Activated T-helper 1 cell treated with anti-CD3 and anti-CD28 coated beads, Interleukin-12 subunit alpha, Interleukin-12 subunit beta, Interleukin-2, Interleukin-4 antibody, amounts not matched to agents 30 ng/mL and 10 ng/mL and 1 ng/mL, durations not matched to agents 14 hours and 24 hours and 36 hours (primary cell): ENCODE measurements at regions of chr6 and their contacts with region 1.

Region 1: GRCh38 chr6:106525111-106525881 is 104.0 kb downstream of the RTN4IP1 start:
- DNase-seq: no peak
- H3K4me3 Mint-ChIP-seq: peak overlapping the region; percentile 82
- H3K27ac Mint-ChIP-seq: peak overlapping the region; percentile 82
- H3K4me1 Mint-ChIP-seq: peaks cover 71% of the 10 kb centered on the region
- H3K27me3 Mint-ChIP-seq: no peaks in the 10 kb centered on the region

Region 2: GRCh38 chr6:107964671-107965340 is 1439.5 kb after region 1 on chr6:
- intact Hi-C with region 1: loop called (anchors 5 kb)
- DNase-seq: no peak
- H3K4me3 Mint-ChIP-seq: no peak overlapping the region
- H3K27ac Mint-ChIP-seq: peak overlapping the region; percentile 58
- H3K4me1 Mint-ChIP-seq: peaks cover 8% of the 10 kb centered on the region
- H3K27me3 Mint-ChIP-seq: peaks cover 2% of the 10 kb centered on the region